ENCODE measurements at regions of chr15 and their contacts with region 1.

Region 1: GRCh38 chr15:91302588-91303439 is 202.8 kb downstream of the SV2B start:
- DNase-seq: no peak
- ATAC-seq: peak; percentile 84

Region 2: DNA sequence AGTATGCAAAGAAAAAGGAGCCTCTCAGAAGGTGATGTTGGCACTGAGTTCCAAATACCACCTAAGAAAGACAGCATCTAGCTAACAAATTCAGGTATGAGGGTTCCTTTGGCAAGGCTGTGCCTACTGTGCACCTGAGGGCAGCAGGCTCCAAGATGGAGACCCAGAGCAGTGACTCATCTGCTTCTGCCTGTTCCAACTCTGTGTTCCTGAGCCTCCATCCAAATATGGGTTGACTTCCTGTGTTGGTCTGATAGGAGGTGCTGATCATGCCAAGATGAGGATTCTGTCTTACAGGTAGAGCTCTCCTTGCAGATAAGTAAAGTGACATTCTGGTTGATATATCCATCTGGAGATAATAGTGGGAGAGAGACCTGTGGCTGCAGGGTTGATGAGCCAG is 176.7 kb before region 1 on chr15:
- intact Hi-C with region 1: no loop called
- DNase-seq: no peak
- ATAC-seq: no peak

Region 3: DNA sequence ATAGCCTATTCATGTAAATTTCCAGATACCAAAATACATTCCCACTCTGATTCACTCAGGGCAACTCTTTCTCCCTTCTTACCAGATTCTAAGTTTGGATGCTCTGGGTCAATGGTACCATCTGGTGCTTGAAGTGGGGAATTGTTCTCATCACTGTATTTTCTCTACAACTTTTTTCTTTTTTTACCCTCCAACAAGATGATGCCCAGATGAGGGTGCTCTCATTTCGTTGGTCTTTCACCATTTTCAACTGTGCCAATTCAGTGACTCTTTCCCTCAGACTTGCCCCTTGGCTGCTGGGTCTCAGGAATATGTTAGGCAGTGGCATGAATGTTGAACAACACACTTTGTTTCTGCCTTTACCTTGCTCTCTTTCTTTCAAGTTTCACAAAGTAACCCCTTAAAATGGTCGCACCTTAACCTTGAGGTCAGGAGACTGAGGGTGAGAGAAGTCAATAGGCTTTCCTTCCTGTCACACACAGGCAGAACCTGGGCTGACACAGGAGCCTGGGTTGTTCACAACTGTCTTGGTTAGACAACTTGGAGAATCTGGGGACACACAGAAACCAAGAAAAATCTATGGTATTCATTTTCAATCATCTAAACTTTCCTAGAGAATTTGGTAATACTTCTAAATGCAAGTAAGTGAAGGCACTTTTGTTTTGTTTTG is 220.0 kb after region 1 on chr15:
- intact Hi-C with region 1: loop called (anchors 2 kb)
- DNase-seq: no peak
- ATAC-seq: peak; percentile 34

Region 4: GRCh38 chr15:91627473-91628278 is 324.9 kb after region 1 on chr15:
- intact Hi-C with region 1: loop called (anchors 10 kb)
- DNase-seq: peak; percentile 77
- ATAC-seq: peak; percentile 92

Region 5: GRCh38 chr15:91706322-91707032 is 403.7 kb after region 1 on chr15:
- intact Hi-C with region 1: loop called (anchors 2 kb)
- DNase-seq: peak; percentile 81
- ATAC-seq: peak; percentile 89

Region 6: DNA sequence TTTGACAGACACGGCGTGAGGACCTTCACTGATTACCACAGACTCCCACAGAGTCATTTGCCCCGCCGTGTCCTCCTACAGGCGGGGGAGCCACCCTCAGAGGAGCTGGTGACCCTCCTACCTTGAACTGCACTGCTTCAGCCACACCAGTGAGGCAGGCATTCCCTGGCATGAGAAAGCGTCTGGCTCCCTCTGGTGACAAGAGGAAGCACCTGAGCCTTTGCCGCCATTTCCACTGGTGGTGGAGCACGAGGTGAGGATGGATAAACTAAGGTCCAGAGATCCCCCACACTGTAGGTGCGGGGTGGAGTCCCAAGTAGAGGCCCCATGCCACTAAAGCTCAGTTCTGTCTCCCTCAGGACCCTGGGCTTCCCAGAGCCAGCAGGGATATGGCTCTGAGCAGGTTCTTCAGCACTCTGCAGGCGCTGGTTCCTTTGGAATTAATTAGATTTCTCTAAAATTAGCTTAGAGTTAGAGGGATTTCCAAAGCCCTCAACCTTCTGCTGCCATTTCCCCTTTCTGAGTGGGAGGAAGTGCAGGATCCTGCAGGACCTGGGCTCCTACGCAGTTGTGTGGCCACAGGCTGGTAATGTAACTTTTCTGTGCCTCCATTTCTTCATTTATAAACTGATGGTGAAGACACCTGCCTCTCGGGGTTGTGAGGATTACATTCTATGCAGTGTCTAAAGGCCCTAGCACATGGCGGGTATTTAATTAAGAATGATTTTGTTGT is 774.7 kb after region 1 on chr15:
- intact Hi-C with region 1: loop called (anchors 2 kb)
- DNase-seq: no peak
- ATAC-seq: peak; percentile 73

Region 7: DNA sequence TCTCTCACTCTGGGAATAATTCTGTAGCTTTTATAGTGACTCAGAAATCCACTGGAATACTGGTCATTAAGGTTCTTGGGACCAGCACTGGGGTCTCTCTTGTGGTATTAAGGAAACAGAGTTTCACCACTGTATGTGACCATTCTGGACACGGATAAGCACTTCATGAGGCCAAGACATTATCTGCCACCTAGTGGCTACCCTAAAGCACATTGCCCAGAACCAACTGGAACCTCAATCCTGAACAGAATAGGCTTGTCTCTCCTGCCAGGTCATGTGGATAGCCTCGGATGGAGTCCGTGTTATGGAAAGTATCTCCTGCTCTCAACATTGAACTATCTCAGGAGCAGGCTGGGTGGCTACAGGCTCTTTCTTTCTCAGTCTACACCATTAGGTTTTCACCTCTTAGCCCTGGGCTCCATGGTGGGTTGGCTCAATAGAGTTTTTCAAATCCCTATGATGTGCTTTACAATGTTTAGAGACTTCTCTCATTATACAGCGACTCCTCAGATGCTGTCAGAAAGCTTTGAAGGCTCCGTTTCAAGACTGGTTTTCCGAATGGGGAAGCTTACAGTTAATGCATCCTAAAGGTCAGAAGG is 923.3 kb after region 1 on chr15:
- intact Hi-C with region 1: loop called (anchors 10 kb)
- DNase-seq: no peak
- ATAC-seq: peak; percentile 81